SK-N-SH (cell line): ENCODE measurements at regions of chr18 and their contacts with region 1.

Region 1: DNA sequence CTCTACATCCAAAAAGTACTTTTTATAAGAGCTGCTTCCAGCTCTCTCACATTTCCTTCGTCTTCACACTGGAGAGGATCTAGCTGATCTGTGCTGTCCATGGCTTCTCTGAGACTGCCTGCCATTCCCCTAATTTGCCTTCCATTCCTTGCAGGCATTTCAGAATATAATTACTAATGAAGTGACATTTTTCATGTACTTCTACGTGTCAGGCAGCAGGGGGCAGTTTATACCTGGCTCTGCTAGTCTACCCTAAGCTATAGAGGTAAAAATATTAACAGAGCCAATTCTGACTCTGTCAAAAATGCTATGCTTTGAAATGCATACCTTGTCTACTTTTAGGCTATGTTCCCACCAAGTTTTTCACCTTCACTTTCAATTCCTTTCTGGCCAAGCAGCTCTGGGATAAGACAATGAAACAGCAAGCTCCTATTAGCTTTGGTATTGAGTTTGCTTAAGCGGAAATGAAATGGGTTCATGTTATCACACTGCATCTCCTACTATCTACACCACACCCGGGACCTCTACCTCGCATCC is 81.9 kb downstream of the MEP1B start:
- DNase-seq: peak; percentile 62
- H3K4me3 ChIP-seq: no peak overlapping the region; a peak in 1 of 4 replicates
- H3K27ac ChIP-seq: no peak overlapping the region
- H3K4me1 ChIP-seq: peaks cover 0 to 4% of the 10 kb centered on the region in 2 experiments; a peak in 1 of 4 replicates
- H3K27me3 ChIP-seq: no peaks in the 10 kb centered on the region
- CTCF ChIP-seq: peak; percentile 83
- EP300 ChIP-seq: no peak
- RAD21 ChIP-seq: peak; percentile 89

Region 2: DNA sequence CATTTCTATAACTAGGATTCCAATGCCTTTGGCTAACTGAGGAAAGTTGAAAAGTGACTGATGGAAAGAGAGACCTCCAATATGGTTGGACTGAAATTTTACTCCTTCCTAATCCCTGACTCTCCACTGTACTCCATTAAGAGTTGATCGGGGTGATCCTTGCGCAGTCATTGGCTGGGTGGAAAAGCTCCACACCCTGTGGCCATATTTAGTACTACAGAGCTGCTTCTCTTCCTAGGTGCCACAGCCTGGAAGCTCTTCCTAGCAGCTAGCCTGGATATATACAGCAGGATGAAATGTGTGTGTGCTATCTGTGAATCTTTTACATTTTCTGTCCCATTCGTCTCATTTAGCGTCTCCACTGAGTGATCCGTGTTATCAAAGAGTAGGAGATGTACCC is 10.7 kb before region 1 on chr18:
- CTCF ChIA-PET with region 1: interaction called, 19 read pairs
- POLR2A ChIA-PET with region 1: no interaction called
- DNase-seq: no peak
- H3K4me3 ChIP-seq: no peak overlapping the region
- H3K27ac ChIP-seq: no peak overlapping the region
- H3K4me1 ChIP-seq: no peaks in the 10 kb centered on the region; a peak in 1 of 4 replicates
- H3K27me3 ChIP-seq: no peaks in the 10 kb centered on the region
- CTCF ChIP-seq: peak; percentile 20; the same call in 1 of the 2 replicates
- EP300 ChIP-seq: no peak
- RAD21 ChIP-seq: no peak

Region 3: GRCh38 chr18:32289483-32290075 is 17.8 kb after region 1 on chr18:
- CTCF ChIA-PET with region 1: interaction called, 49 read pairs
- POLR2A ChIA-PET with region 1: no interaction called
- DNase-seq: peak; percentile 70
- H3K4me3 ChIP-seq: no peak overlapping the region
- H3K27ac ChIP-seq: no peak overlapping the region
- H3K4me1 ChIP-seq: no peaks in the 10 kb centered on the region
- H3K27me3 ChIP-seq: no peaks in the 10 kb centered on the region
- CTCF ChIP-seq: peak; percentile 88
- EP300 ChIP-seq: no peak
- RAD21 ChIP-seq: peak; percentile 81

Region 4: DNA sequence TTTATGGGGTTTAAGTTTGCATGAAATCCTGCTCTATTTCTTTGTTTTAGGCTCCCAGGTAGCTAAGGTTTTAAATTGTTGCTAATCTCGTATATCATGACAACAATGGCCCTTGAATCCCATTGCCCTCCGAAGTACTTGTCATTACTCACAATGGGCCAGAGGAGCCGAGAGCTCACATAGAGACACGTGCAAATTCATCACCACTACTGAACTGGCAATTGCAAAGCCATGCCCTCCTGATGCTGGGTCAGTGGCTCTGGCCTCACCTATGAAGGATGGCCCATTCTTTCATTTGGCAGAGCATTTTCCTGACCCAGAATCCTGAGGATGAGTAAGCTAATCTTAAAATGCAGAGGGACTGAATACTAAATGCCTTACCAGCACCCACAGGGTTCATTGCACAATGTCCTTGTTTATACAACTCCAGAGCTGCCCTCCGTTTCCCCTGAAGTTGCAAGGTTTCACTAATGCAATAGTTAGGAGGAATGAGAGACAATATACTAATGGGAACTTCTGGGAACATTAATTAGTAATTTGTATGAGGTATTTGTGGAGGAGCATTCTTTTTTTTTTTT is 270.6 kb after region 1 on chr18:
- CTCF ChIA-PET with region 1: interaction called, 15 read pairs
- POLR2A ChIA-PET with region 1: no interaction called
- DNase-seq: no peak
- H3K4me3 ChIP-seq: no peak overlapping the region
- H3K27ac ChIP-seq: no peak overlapping the region
- H3K4me1 ChIP-seq: no peaks in the 10 kb centered on the region; a peak in 1 of 4 replicates
- H3K27me3 ChIP-seq: no peaks in the 10 kb centered on the region
- CTCF ChIP-seq: no peak
- EP300 ChIP-seq: no peak
- RAD21 ChIP-seq: no peak

Region 5: DNA sequence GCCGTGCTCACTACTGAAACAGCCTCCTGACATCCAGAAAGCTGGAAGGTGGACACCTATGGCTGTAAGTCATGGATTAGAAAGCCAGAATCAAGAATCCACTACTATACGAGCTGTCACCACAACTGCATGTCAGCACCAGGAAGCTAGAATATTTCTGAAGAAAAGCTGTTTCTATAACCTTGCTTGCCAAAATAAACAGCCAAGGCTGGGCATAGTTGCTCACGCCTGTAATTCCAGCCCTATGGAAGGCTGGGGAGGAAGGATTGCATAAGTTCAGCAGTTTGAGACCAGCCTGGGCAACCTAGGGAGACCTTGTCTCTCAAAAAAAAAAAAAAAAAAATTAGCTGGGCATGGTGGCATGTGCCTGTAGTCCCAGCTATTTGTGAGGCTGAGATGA is 295.2 kb after region 1 on chr18:
- CTCF ChIA-PET with region 1: interaction called, 11 read pairs
- POLR2A ChIA-PET with region 1: no interaction called
- DNase-seq: no peak
- H3K4me3 ChIP-seq: no peak overlapping the region
- H3K27ac ChIP-seq: no peak overlapping the region
- H3K4me1 ChIP-seq: no peaks in the 10 kb centered on the region; a peak in 1 of 4 replicates
- H3K27me3 ChIP-seq: no peaks in the 10 kb centered on the region
- CTCF ChIP-seq: no peak
- EP300 ChIP-seq: no peak
- RAD21 ChIP-seq: no peak

Region 6: GRCh38 chr18:32695534-32695933 is 423.8 kb after region 1 on chr18:
- CTCF ChIA-PET with region 1: no interaction called
- POLR2A ChIA-PET with region 1: no interaction called
- DNase-seq: no peak
- H3K4me3 ChIP-seq: no peak overlapping the region
- H3K27ac ChIP-seq: no peak overlapping the region
- H3K4me1 ChIP-seq: peaks cover 0 to 2% of the 10 kb centered on the region in 2 experiments; a peak in 2 of 4 replicates
- H3K27me3 ChIP-seq: no peaks in the 10 kb centered on the region
- CTCF ChIP-seq: no peak
- EP300 ChIP-seq: no peak
- RAD21 ChIP-seq: no peak